Sciatic nerve (tissue), 2 donors: ENCODE measurements at regions of chr4 and their contacts with region 1.

Region 1: GRCh38 chr4:80726471-80726870 is 304.0 kb upstream of the BMP3 start:
- DNase-seq: no peak
- ATAC-seq: no peak

Region 2: GRCh38 chr4:80787306-80787705 is 60.8 kb after region 1 on chr4:
- intact Hi-C with region 1: no loop called
- DNase-seq: no peak
- ATAC-seq: no peak

Region 3: GRCh38 chr4:80798082-80798481 is 71.6 kb after region 1 on chr4:
- intact Hi-C with region 1: no loop called
- DNase-seq: no peak
- ATAC-seq: no peak

Region 4: DNA sequence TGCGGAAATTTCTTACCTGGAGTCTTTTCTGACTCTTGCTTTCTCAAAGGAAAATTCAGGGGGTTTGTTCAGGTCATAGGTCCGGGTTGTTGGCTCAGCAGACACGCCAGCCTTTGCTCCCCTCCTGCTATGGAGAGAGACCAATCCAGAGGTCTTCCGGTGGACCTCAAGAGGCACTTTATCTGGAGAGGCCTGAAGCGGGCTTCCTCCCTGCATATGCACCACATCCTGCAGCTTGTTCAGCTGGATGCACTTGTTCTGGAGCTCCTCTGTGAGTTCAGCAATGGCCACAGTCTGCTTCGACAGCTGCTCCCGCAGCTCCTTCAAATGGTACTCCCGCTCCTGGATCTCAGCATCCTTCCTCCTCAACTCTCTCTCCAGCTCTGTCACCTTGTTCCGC is 478.1 kb after region 1 on chr4:
- intact Hi-C with region 1: loop called (anchors 5 kb)
- DNase-seq: no peak
- ATAC-seq: no peak

Region 5: GRCh38 chr4:81282131-81282530 is 555.7 kb after region 1 on chr4:
- intact Hi-C with region 1: no loop called
- DNase-seq: no peak
- ATAC-seq: no peak